CD4-positive, alpha-beta memory T cell (primary cell): ENCODE measurements at regions of chr14 and their contacts with region 1.

Region 1: DNA sequence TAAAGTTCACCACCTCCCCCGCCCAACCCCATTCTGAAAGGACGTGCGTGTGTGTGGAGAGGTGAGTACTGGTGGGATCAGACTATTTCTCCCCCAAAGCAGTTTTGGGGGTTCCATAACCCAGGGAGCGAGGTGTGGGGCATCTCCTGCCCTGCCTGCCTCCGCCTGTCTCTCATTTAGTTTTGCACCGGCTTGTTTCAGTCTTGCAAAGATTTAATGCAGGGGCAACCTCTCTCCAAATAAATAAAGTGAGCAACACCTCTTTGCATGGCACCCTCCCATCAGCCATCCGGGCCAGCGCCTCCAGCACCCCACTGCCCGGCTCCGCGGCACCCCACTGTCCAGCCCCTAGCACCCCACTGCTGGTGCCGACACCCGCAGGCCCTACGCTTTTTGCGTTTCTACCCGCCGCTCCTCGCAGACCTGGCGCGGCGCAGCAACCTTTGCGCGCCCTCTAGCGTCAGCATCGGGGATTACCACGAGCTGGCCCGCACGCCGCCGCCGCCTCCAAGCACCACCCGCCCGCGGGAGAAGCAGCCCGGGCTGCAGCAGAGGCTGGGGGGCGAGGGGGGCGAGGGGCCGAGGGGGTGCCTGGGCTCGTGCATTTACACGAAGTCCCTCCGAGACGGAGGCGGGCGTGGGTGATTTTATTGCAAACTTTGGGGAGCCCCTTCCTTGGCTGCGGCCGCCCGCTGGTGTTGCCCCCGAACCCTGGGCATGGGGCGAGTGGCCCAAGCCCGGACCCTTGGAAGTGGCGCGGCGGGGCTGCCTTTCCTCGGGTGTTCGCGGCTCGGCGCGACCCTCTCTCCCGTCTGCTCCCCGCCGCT is 55.8 kb upstream of the VRK1 start:
- DNase-seq: peak; percentile 61 to 78 (median 70)
- H3K4me3 ChIP-seq: peak overlapping the region in 1 of 2 donors; percentile 36
- H3K4me3 Mint-ChIP-seq: peak overlapping the region; percentile 68 to 87 (median 77)
- H3K27ac ChIP-seq: no peak overlapping the region
- H3K27ac Mint-ChIP-seq: no peak overlapping the region
- H3K4me1 ChIP-seq: peaks cover 13% of the 10 kb centered on the region
- H3K4me1 Mint-ChIP-seq: peaks cover 0 to 8% (median 5%) of the 10 kb centered on the region in 4 donors
- H3K27me3 ChIP-seq: peaks cover 20% of the 10 kb centered on the region
- H3K27me3 Mint-ChIP-seq: peaks cover 53 to 71% of the 10 kb centered on the region in 2 donors

Region 2: DNA sequence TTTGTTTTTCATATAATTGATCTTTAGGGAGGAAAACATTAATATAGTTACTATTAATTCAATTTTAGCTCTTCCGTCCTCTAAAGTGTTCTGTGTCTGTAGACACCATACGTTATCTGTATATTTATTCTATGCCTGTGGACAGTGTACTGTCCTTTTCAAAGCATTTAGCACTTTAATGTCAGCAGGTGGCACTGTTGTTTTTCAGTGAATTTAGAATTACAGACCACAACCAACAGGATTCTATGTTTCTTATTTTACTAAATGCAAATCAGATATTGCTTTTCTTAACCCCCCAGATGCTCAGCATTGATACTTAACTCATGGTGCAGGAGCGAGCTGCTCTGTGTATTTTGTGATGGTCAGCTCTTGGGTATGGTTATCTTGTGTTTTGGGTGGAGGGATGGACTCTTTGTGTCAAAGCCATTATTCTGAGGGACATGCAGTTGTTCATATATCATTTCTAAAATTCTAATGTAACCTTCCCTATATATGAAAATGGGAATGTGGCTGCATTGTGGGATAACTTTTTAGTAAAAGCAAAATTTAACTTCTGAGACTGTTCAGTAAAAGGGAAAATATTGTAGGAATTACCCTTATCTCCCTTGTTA is 174.0 kb before region 1 on chr14:
- CTCF ChIA-PET with region 1: interaction called, 27 read pairs
- POLR2A ChIA-PET with region 1: no interaction called
- intact Hi-C with region 1: no loop called
- DNase-seq: peak in 4 of 5 donors; percentile 15 to 37 (median 19)
- H3K4me3 ChIP-seq: no peak overlapping the region
- H3K4me3 Mint-ChIP-seq: no peak overlapping the region
- H3K27ac ChIP-seq: no peak overlapping the region
- H3K27ac Mint-ChIP-seq: no peak overlapping the region
- H3K4me1 ChIP-seq: no peaks in the 10 kb centered on the region
- H3K4me1 Mint-ChIP-seq: peaks cover 0 to 4% (median under 1%) of the 10 kb centered on the region in 4 donors
- H3K27me3 ChIP-seq: no peaks in the 10 kb centered on the region
- H3K27me3 Mint-ChIP-seq: no peaks in the 10 kb centered on the region

Region 3: DNA sequence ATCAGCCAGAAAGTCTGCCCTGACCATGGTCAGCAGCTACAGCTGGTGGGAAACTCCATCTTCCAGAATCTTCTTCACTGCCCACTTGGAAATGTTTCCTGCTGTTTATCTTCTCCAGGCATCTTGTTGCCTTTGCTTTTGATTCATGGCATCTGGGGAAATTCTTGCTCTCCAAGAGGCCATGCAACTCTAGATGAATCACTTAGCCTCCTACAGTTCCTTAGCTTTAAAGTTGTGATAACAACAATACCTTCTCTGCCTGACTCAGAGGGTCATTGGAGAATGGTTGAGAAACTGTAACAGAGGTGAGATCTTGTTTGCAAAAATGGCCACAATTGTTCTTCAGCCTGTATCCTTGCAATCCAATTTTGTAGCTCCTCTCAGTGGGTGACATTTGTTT is 65.2 kb before region 1 on chr14:
- CTCF ChIA-PET with region 1: no interaction called
- POLR2A ChIA-PET with region 1: no interaction called
- intact Hi-C with region 1: no loop called
- DNase-seq: no peak
- H3K4me3 ChIP-seq: no peak overlapping the region
- H3K4me3 Mint-ChIP-seq: no peak overlapping the region
- H3K27ac ChIP-seq: no peak overlapping the region
- H3K27ac Mint-ChIP-seq: no peak overlapping the region
- H3K4me1 ChIP-seq: no peaks in the 10 kb centered on the region
- H3K4me1 Mint-ChIP-seq: no peaks in the 10 kb centered on the region
- H3K27me3 ChIP-seq: no peaks in the 10 kb centered on the region
- H3K27me3 Mint-ChIP-seq: peaks cover 24 to 47% of the 10 kb centered on the region in 2 donors

Region 4: DNA sequence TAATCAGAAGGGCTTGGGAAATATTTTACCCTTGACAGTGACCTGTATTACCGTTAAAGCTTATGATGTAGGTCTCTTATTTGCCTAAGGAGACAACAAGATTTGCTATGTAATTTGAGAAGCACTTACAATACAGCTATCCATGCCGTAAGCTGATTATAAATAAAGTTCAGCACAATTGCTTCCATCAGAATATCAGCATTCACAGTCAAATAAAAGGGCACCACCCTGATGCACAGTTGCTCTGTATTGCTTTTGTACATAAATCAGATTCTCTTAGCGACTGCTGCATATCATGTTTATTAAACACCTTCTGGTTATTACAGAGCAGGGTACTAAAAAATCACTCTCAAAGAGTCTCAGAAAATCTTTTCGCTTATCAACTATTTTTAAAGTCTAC is 11.5 kb before region 1 on chr14:
- CTCF ChIA-PET with region 1: interaction called, 16 read pairs
- POLR2A ChIA-PET with region 1: no interaction called
- intact Hi-C with region 1: no loop called
- DNase-seq: no peak
- H3K4me3 ChIP-seq: no peak overlapping the region
- H3K4me3 Mint-ChIP-seq: no peak overlapping the region
- H3K27ac ChIP-seq: no peak overlapping the region
- H3K27ac Mint-ChIP-seq: no peak overlapping the region
- H3K4me1 ChIP-seq: no peaks in the 10 kb centered on the region
- H3K4me1 Mint-ChIP-seq: no peaks in the 10 kb centered on the region
- H3K27me3 ChIP-seq: peaks cover 7% of the 10 kb centered on the region
- H3K27me3 Mint-ChIP-seq: peaks cover 18 to 22% of the 10 kb centered on the region in 2 donors

Region 5: DNA sequence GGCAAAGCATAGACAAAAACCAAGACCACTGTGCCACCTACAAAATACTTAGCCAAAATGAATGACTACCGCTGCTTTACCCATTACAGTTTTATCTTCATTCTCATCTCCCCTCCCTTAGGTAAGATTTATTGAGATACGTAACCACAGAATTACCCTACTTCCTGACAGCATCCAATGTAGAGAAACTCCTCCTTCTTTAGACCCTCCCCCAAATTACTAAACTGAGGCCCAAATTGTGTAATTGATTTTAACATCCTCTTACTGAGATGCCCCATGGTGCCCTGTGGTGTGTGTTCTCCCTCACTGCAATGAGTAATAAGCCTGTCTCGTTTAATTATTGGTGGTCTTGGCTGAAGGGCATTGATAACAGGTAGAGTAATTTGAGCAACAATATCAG is 74.9 kb after region 1 on chr14:
- CTCF ChIA-PET with region 1: no interaction called
- POLR2A ChIA-PET with region 1: no interaction called
- intact Hi-C with region 1: no loop called
- DNase-seq: no peak
- H3K4me3 ChIP-seq: no peak overlapping the region
- H3K4me3 Mint-ChIP-seq: peak overlapping the region in 2 of 8 donors; percentile 1 to 37
- H3K27ac ChIP-seq: no peak overlapping the region
- H3K27ac Mint-ChIP-seq: peak overlapping the region in 3 of 7 donors; percentile 26 to 55 (median 38)
- H3K4me1 ChIP-seq: peaks cover 23% of the 10 kb centered on the region
- H3K4me1 Mint-ChIP-seq: peaks cover 26 to 40% (median 34%) of the 10 kb centered on the region in 4 donors
- H3K27me3 ChIP-seq: no peaks in the 10 kb centered on the region
- H3K27me3 Mint-ChIP-seq: no peaks in the 10 kb centered on the region

Region 6: DNA sequence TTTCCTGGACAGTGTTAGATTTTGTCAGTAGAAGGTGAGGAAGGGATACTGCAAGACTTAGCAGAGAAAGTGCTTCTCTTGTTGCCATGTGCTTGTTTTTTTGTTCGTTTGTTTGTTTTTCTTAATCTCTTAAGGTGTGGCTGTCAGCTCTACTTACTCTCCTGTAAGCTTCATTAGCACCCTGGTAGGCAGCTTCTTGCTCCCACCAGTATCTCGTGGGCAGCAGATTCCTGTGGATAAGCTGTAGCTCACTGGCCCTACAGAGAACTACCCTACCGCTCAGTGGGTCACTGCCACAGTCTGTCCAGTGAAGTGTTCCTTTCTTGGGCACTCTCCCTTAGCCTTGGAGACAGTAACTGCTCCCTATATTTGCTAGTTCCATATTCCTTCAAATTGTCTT is 85.9 kb after region 1 on chr14:
- CTCF ChIA-PET with region 1: no interaction called
- POLR2A ChIA-PET with region 1: no interaction called
- intact Hi-C with region 1: no loop called
- DNase-seq: no peak
- H3K4me3 ChIP-seq: no peak overlapping the region
- H3K4me3 Mint-ChIP-seq: no peak overlapping the region
- H3K27ac ChIP-seq: no peak overlapping the region
- H3K27ac Mint-ChIP-seq: peak overlapping the region in 1 of 7 donors; percentile 5
- H3K4me1 ChIP-seq: no peaks in the 10 kb centered on the region
- H3K4me1 Mint-ChIP-seq: peaks cover 15 to 20% (median 18%) of the 10 kb centered on the region in 4 donors
- H3K27me3 ChIP-seq: no peaks in the 10 kb centered on the region
- H3K27me3 Mint-ChIP-seq: no peaks in the 10 kb centered on the region

Region 7: DNA sequence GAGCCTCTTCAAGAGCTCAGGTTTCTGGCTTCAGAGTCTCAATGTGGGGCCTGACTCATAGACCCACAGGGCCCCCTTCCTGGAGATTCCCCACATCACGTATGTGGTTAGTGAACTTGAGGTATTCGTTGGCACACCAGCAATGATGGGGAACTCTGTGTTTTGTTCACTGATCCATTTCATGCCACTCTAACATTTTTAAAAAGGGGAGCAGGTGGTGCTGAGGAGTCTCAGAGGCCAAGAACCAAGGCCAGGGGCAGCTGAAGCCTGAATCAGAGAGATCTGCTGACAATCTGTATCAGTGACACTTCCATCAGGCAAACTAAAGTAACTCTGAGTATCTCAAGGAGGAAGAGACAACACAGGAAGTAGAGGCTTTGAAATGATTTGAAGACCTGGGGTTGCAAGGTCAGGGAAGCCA is 379.3 kb after region 1 on chr14:
- CTCF ChIA-PET with region 1: no interaction called
- POLR2A ChIA-PET with region 1: no interaction called
- intact Hi-C with region 1: no loop called
- DNase-seq: peak; percentile 34 to 78 (median 45)
- H3K4me3 ChIP-seq: peak overlapping the region in 1 of 2 donors; percentile 19
- H3K4me3 Mint-ChIP-seq: peak overlapping the region in 7 of 8 donors; percentile 56 to 88 (median 70)
- H3K27ac ChIP-seq: peak overlapping the region; percentile 38
- H3K27ac Mint-ChIP-seq: peak overlapping the region; percentile 81 to 95 (median 94)
- H3K4me1 ChIP-seq: peaks cover 34% of the 10 kb centered on the region
- H3K4me1 Mint-ChIP-seq: peaks cover 19 to 37% (median 31%) of the 10 kb centered on the region in 4 donors
- H3K27me3 ChIP-seq: no peaks in the 10 kb centered on the region
- H3K27me3 Mint-ChIP-seq: no peaks in the 10 kb centered on the region